HEK293T (cell line): ENCODE measurements at regions of chr2 and their contacts with region 1.

Region 1: GRCh38 chr2:219521066-219521880 is 7.0 kb downstream of the ASIC4 start:
- DNase-seq: peak; percentile 79

Region 2: DNA sequence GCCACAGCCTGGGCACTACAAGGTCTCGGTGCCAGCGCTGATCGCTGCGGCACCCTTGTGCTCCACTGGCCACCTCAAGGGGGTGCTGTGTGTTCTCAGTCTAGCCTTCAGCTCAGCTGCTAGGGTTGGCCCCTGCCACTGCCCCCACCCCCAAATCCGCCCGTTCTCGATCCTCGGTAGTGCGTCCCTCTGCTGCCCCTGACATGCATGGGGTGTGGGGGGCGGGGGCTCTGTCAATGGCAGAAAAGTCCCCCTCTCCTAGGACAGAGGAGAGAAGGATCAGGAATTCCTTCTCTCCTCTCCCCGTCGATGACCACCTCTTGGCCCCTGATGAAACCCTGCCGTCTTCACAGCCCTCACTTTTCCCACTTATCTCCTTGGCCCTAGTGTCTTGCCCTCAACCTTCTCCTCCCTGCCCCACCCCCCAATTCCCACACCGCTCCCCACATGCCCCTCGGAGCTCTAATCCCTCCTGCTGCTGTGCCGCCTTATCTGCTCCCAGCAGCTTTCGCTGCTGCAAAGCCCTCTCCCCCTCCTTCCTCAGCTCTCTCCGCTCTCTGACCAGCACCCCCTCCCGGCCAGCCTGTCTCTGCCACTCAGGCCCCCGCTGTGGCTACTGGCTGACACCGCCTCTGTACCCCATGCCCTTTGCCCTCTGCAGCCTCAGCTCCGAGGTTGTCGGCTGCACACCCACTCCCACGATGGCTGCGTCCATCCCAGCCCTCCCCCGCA is 11.3 kb before region 1 on chr2:
- CTCF ChIA-PET with region 1: interaction called, 25 read pairs
- POLR2A ChIA-PET with region 1: interaction called, 6 read pairs
- DNase-seq: peak; percentile 70